ENCODE measurements at regions of chr3 and their contacts with region 1.

Region 1: GRCh38 chr3:110184536-110184935 is 847.2 kb upstream of the DPPA4 start:
- DNase-seq: no peak
- H3K4me3 ChIP-seq: no peak overlapping the region
- H3K27ac ChIP-seq: no peak overlapping the region
- H3K4me1 ChIP-seq: no peaks in the 10 kb centered on the region
- H3K27me3 ChIP-seq: no peaks in the 10 kb centered on the region
- CTCF ChIP-seq: no peak
- POLR2A ChIP-seq: no peak

Region 2: DNA sequence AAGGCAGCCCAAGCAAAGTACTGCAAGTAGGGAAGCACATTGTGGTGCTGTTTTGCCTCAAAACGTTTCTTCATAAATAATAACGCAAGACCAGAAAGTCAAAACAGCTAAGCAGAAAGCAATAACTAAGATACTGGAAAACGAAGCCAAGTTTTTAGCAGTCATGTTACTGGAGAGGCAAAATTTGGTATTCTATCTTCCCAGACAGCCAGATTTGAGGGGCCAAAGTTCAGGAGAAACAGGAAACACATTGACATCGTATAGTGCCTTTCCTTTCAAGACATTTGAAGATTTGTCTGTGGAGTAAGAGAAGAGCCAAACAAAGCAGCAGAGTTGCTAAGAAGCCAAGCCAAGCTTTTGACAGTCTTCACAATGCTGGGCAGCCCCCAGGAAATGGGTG is 43.5 kb after region 1 on chr3:
- intact Hi-C with region 1: loop called (anchors 2 kb)
- DNase-seq: no peak
- H3K4me3 ChIP-seq: no peak overlapping the region
- H3K27ac ChIP-seq: no peak overlapping the region
- H3K4me1 ChIP-seq: no peaks in the 10 kb centered on the region
- H3K27me3 ChIP-seq: no peaks in the 10 kb centered on the region
- CTCF ChIP-seq: no peak
- POLR2A ChIP-seq: no peak

Measured in breast epithelium (tissue), 4 donors.